Activated naive CD4-positive, alpha-beta T cell treated with anti-CD3 and anti-CD28 coated beads for 36 hours (primary cell): ENCODE measurements at regions of chr6 and their contacts with region 1.

Region 1: DNA sequence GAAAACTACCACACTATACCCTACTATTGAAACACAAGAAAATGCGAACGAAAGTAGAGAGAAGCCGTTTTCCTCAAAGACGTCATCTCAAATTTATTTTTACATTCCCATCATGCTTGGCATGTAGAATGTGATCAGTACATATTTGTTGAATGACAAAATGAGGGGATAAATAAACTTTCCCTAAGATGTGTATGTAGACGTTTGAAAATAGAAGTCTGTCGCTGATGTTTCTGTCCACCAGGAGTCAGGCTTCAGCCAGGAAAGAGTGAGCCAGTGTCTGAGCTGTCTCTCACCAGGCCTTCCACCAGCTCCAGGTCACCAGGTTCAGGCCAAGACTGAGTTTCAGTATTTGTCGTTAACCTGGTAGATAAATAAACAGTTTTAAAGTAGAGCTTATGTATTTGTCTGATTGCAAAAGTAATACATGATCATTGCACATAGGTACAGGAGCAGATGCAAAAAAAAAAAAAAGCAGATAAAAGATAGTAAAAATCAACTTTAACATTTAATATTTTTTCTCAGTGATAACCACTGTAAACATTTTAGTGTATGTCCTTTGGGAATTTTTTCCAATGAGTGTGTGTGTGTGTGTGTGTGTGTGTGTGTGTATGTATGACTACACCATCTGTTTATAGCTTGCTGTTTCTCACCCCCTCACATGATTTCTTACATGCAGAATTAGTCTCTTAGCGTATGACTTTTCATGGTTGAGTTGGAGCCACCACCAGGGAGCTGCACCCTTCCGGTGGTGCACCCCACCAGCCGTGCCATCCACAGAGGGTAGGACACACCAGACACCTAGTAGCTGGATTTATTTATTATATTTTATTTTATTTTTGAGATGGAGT is 26.2 kb downstream of the WRNIP1 start:
- DNase-seq: peak; percentile 87
- H3K4me3 Mint-ChIP-seq: no peak overlapping the region
- H3K27ac Mint-ChIP-seq: no peak overlapping the region
- H3K4me1 Mint-ChIP-seq: peaks cover 39% of the 10 kb centered on the region
- H3K27me3 Mint-ChIP-seq: no peaks in the 10 kb centered on the region

Region 2: DNA sequence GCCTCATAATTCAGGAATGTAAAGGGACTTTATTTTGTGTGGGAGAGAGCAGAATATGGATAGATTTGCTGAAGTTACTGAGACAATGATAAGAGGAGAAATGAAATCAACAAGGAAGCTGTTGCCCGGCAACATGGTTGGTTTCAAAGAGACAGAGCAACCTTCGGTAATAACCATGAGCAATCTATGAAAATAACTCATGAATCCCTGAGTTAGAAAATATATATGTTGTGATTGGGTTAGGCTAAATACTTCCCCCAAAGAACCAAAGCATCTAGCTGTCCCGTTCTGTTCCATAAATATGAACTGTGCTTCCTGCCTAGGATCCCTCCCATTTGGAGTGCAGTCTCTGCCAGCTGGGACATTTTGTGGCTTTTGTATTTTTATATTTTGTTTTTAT is 27.2 kb after region 1 on chr6:
- CTCF ChIA-PET with region 1: interaction called, 6 read pairs
- intact Hi-C with region 1: loop called (anchors 1 kb)
- DNase-seq: peak; percentile 61
- H3K4me3 Mint-ChIP-seq: no peak overlapping the region
- H3K27ac Mint-ChIP-seq: peak overlapping the region; percentile 17
- H3K4me1 Mint-ChIP-seq: peaks cover 40% of the 10 kb centered on the region
- H3K27me3 Mint-ChIP-seq: no peaks in the 10 kb centered on the region

Region 3: GRCh38 chr6:2841264-2842138 is 50.2 kb after region 1 on chr6 and contains the start of gene SERPINB1:
- CTCF ChIA-PET with region 1: interaction called, 44 read pairs
- intact Hi-C with region 1: loop called (anchors 1 kb)
- DNase-seq: peak; percentile 94
- H3K4me3 Mint-ChIP-seq: peak within 1 kb of the TSS; percentile 81
- H3K27ac Mint-ChIP-seq: peak within 1 kb of the TSS; percentile 87
- H3K4me1 Mint-ChIP-seq: peaks cover 61% of the 10 kb centered on the region
- H3K27me3 Mint-ChIP-seq: no peaks in the 10 kb centered on the region
- total RNA-seq, gene SERPINB1: 200 to 208 TPM

Region 4: DNA sequence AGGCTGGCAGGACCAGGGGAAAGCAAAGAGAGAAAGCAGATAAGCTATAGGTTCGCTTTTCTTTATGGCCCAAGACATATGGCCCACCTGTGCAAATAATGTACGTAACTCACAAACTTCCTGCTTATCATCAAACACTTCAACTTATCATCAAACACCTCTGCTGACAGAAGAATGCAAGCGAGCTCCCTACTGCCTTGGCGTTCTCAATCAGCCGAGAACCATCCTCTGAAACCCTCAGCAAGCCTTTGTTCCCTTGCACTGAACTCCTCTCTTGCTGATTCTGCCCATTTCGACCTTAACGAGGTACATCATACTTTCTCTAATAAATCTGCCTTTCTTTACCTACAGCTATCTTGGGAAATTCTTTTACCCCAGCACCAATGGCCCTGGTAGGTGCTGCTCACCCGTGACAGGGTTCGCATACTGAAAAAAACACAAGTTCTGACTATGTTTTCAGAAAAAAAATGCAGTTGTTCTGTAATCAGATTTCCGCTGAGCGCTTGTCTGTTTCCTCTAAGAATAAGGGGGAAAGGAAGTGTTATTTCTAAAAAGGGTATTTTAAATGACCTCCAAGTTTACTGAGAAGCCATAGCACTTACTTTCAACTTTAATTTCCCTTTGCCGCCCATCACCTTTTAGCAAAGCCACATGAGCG is 151.7 kb after region 1 on chr6:
- CTCF ChIA-PET with region 1: no interaction called
- intact Hi-C with region 1: no loop called
- DNase-seq: peak; percentile 33
- H3K4me3 Mint-ChIP-seq: peak overlapping the region; percentile 60
- H3K27ac Mint-ChIP-seq: peak overlapping the region; percentile 66
- H3K4me1 Mint-ChIP-seq: peaks cover 51% of the 10 kb centered on the region
- H3K27me3 Mint-ChIP-seq: no peaks in the 10 kb centered on the region

Region 5: DNA sequence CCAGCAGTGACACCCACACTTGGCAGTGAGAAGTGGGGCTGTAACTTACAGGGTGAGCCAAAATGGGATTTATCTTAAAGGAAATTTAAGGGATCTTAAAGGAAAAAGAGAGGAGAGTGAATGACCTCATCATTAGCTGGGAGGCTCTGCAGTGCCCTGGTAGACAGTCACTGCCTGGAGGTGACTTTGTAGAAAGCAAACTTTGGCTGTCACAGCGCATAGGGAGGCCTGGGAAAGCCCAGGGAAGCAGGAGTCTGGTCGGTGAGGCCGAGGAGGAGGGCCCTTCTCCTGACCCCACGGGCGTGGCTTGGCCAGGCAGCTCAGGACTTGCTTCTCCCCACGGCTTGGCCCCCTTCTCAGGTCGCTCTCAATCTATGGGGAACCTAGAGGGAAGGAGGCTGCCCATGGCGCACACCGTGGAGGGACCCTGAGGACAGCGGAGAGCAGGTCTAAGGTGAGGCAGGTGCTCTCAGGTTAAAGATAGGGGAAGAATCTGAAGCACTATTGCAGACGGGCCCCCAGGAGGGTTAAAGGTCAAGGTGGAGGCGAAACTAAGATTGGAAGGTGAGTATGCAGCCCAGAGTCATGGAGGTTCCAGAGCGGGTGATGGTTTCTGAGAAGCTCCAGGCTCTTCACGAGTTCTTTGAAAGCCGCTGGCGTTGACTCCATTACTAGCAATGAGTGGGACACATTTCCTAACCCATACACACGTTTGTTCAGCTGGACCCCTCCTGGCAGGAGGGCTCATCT is 261.3 kb after region 1 on chr6:
- CTCF ChIA-PET with region 1: interaction called, 4 read pairs
- intact Hi-C with region 1: loop called (anchors 2 kb)
- DNase-seq: no peak
- H3K4me3 Mint-ChIP-seq: peak overlapping the region; percentile 74
- H3K27ac Mint-ChIP-seq: no peak overlapping the region
- H3K4me1 Mint-ChIP-seq: peaks cover 17% of the 10 kb centered on the region
- H3K27me3 Mint-ChIP-seq: no peaks in the 10 kb centered on the region

Region 6: DNA sequence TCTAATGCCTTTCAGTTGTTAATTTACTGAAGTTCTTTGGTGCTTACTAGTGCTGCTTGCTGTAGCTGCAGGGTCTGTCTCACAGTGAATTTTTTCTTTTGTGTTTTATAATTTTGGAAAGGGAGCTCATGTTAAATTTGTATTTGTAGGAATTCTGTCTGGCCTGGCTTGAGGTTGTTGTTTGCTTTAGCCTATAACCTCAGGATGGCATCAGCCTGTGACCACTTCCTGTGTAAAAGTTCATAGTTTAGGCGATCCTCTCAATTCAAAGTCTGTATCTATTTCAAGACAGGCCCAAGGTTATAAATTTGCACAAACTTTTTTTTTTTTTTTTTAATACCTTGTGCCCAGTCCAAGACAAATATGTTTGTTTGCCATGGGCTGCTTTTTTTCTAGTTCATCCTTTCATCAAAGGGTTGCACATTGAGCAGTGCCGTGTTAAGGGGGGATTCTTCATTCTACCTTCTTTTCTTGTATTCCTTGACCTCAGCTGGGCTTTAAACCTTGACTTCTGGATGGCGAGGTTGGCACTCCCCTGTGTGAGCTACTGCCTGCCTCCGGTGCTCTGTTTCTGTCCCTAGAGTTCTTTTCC is 284.3 kb after region 1 on chr6:
- CTCF ChIA-PET with region 1: no interaction called
- intact Hi-C with region 1: no loop called
- DNase-seq: no peak
- H3K4me3 Mint-ChIP-seq: peak overlapping the region; percentile 20
- H3K27ac Mint-ChIP-seq: peak overlapping the region; percentile 66
- H3K4me1 Mint-ChIP-seq: peaks cover 42% of the 10 kb centered on the region
- H3K27me3 Mint-ChIP-seq: no peaks in the 10 kb centered on the region